PC-3 (cell line): ENCODE measurements at regions of chr4 and their contacts with region 1.

Region 1: DNA sequence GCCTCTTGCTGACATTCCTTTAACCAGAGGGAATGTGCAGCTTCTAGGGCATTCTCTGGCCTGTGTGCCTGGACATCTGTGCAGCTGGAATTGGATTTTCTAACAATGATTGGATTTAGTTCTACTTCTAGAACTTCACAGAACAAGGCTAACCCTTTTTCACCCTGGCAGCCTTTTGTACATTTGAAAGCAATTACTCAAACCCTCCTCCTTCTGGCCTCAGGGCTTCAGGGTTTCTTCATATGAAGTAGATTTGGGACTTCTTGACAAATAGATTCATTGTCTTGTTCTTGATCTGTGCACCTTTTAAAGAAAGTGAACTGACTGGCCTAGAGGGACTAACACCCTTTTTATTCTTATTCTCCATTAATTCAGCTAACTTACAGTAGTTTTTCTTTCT is 30.1 kb downstream of the SPATA18 start:
- DNase-seq: no peak
- ATAC-seq: no peak
- H3K4me3 ChIP-seq: no peak overlapping the region
- H3K27ac ChIP-seq: no peak overlapping the region
- H3K4me1 ChIP-seq: no peaks in the 10 kb centered on the region
- H3K27me3 ChIP-seq: peaks cover 6% of the 10 kb centered on the region; the same call in 1 of the 2 replicates
- CTCF ChIP-seq: no peak

Region 2: DNA sequence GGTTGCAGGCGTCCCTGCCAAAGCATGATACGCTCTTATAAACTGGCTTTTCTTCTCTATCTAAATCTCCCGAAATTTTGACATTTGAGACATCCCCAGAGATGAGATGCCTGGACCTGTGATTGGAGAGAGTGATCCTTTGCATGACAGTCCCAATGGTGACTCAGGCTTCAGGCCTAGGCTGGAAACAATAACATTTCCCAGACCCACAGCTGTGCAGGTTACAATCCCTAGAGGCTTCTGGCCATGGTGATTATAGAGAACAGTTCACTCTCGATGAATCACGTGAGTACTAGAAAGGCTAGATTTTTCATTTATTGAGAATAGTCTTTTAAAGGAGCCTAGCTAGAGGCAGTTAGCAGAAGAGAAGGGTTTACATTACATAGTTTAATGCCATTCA is 45.8 kb after region 1 on chr4:
- CTCF ChIA-PET with region 1: no interaction called
- POLR2A ChIA-PET with region 1: no interaction called
- intact Hi-C with region 1: no loop called
- DNase-seq: peak; percentile 33
- ATAC-seq: no peak
- H3K4me3 ChIP-seq: no peak overlapping the region
- H3K27ac ChIP-seq: no peak overlapping the region
- H3K4me1 ChIP-seq: no peaks in the 10 kb centered on the region
- H3K27me3 ChIP-seq: peaks cover 4% of the 10 kb centered on the region; the same call in 1 of the 2 replicates
- CTCF ChIP-seq: no peak

Region 3: GRCh38 chr4:52212702-52213101 is 131.5 kb after region 1 on chr4:
- CTCF ChIA-PET with region 1: no interaction called
- POLR2A ChIA-PET with region 1: interaction called, 26 read pairs
- intact Hi-C with region 1: no loop called
- DNase-seq: no peak
- ATAC-seq: no peak
- H3K4me3 ChIP-seq: no peak overlapping the region
- H3K27ac ChIP-seq: no peak overlapping the region
- H3K4me1 ChIP-seq: no peaks in the 10 kb centered on the region
- H3K27me3 ChIP-seq: no peaks in the 10 kb centered on the region
- CTCF ChIP-seq: no peak